Left ventricle myocardium inferior (tissue), 1 donor: ENCODE measurements at regions of chr2 and their contacts with region 1.

Region 1: DNA sequence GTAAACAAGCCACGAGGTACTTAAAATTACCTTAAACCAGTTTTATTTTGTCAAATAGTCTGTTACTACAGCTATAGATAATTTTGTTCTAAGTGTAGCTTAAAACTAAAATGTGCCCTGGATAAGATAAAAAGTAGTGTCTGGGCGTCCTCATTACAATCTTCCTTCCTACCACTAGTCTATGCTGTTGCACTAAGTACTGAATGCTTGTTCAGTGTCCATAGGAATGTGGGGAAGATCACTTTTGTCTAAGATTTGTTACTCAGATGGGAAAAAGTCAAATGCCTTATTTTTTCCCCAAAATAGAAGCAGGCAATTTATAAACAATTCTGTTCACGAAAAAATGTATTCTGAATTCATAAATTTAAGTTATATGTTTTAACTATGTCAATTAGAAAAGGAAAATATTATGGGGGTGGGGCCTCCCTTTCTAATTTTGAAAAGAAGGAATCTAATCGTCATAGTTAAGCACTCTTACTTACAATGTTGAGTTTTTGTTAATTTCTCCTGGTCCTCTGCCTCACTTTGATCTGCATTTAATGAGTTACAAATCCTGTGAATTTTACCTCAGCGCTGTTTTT is 140.4 kb upstream of the VRK2 start:
- DNase-seq: no peak
- H3K4me3 ChIP-seq: no peak overlapping the region
- H3K27ac ChIP-seq: no peak overlapping the region
- H3K4me1 ChIP-seq: no peaks in the 10 kb centered on the region
- H3K27me3 ChIP-seq: no peaks in the 10 kb centered on the region
- CTCF ChIP-seq: peak; percentile 88

Region 2: GRCh38 chr2:58449286-58450010 is 543.2 kb after region 1 on chr2:
- intact Hi-C with region 1: loop called (anchors 10 kb)
- DNase-seq: no peak
- H3K4me3 ChIP-seq: no peak overlapping the region
- H3K27ac ChIP-seq: no peak overlapping the region
- H3K4me1 ChIP-seq: no peaks in the 10 kb centered on the region
- H3K27me3 ChIP-seq: no peaks in the 10 kb centered on the region
- CTCF ChIP-seq: no peak